ENCODE measurements at regions of chr2 and their contacts with region 1.

Region 1: GRCh38 chr2:46461011-46461674 is 18.2 kb upstream of the TMEM247 start:
- DNase-seq: peak; percentile 82
- H3K4me3 Mint-ChIP-seq: no peak overlapping the region
- H3K27ac Mint-ChIP-seq: no peak overlapping the region
- H3K4me1 Mint-ChIP-seq: peaks cover 22% of the 10 kb centered on the region
- H3K27me3 Mint-ChIP-seq: no peaks in the 10 kb centered on the region
- CTCF ChIP-seq: peak; percentile 91

Region 2: GRCh38 chr2:45993476-45993991 is 467.6 kb before region 1 on chr2:
- CTCF ChIA-PET with region 1: interaction called, 3 read pairs
- intact Hi-C with region 1: loop called (anchors 1 kb)
- DNase-seq: peak; percentile 70
- H3K4me3 Mint-ChIP-seq: peak overlapping the region; percentile 9
- H3K27ac Mint-ChIP-seq: no peak overlapping the region
- H3K4me1 Mint-ChIP-seq: peaks cover 25% of the 10 kb centered on the region
- H3K27me3 Mint-ChIP-seq: no peaks in the 10 kb centered on the region
- CTCF ChIP-seq: peak; percentile 62

Region 3: DNA sequence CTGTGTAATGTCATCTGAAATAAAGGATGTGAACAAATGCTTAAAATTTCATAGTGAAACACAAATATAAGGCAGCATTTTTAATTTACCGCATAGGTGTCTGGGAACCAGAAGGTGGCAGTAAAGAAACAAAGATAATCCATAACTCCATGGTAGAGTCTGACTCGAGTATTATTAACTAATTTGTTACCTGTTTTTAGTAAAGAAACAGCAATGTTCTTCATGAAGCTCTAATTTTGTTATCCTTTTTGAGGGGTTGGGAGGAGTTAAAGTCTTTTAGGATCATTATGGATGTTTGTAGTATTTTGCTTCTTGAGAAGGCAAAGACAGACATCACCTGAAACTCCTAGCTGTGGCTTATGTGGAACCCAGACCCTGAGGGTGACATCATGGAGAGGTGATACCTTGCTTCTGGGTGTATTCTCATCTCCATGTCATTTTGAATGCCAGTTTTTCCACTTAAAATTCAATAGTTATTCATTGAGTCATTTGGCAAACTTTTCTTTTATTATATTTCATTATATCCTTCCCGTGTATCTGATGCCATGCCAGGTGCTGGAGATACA is 450.1 kb before region 1 on chr2:
- CTCF ChIA-PET with region 1: interaction called, 3 read pairs
- intact Hi-C with region 1: loop called (anchors 1 kb)
- DNase-seq: no peak
- H3K4me3 Mint-ChIP-seq: no peak overlapping the region
- H3K27ac Mint-ChIP-seq: no peak overlapping the region
- H3K4me1 Mint-ChIP-seq: no peaks in the 10 kb centered on the region
- H3K27me3 Mint-ChIP-seq: no peaks in the 10 kb centered on the region
- CTCF ChIP-seq: no peak